ENCODE measurements at regions of chr17 and their contacts with region 1.

Region 1: GRCh38 chr17:39687811-39688518 is at the start of gene PGAP3:
- DNase-seq: peak; percentile 89
- ATAC-seq: peak; percentile 93
- H3K4me3 Mint-ChIP-seq: peak within 1 kb of the TSS; percentile 98
- H3K27ac Mint-ChIP-seq: peak within 1 kb of the TSS; percentile 95
- H3K4me1 Mint-ChIP-seq: peaks cover 28% of the 10 kb centered on the region
- H3K27me3 Mint-ChIP-seq: no peaks in the 10 kb centered on the region
- total RNA-seq, gene PGAP3: 12.3 to 14.7 TPM

Region 2: DNA sequence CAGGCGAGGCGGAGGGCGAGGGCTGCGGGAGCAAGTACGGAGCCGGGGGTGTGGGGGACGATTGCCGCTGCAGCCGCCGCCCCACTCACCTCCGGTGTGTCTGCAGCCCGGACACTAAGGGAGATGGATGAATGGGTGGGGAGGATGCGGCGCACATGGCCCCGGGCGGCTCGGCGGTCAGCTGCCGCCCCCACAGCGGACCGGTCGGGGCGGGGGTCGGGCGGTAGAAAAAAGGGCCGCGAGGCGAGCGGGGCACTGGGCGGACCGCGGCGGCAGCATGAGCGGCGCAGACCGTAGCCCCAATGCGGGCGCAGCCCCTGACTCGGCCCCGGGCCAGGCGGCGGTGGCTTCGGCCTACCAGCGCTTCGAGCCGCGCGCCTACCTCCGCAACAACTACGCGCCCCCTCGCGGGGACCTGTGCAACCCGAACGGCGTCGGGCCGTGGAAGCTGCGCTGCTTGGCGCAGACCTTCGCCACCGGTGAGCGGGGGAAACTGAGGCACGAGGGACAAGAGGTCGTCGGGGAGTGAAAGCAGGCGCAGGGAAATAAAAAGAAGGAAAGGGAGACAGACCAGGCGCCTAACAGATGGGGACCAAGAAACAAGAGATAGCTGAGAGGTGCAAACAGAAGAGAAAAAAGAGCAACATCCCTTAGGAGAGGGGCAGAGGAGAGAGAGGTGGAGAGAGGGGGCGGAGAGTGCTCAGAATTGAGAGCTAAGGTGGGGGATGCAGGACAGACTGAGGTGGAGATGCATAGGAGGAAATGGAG is 19.6 kb before region 1 on chr17 and contains the start of gene PNMT:
- CTCF ChIA-PET with region 1: interaction called, 12 read pairs
- POLR2A ChIA-PET with region 1: interaction called, 12 read pairs
- DNase-seq: peak; percentile 78
- ATAC-seq: peak; percentile 83
- H3K4me3 Mint-ChIP-seq: peak within 1 kb of the TSS; percentile 26
- H3K27ac Mint-ChIP-seq: no peak within 1 kb of the TSS
- H3K4me1 Mint-ChIP-seq: peaks cover 11% of the 10 kb centered on the region
- H3K27me3 Mint-ChIP-seq: peaks cover 29% of the 10 kb centered on the region
- total RNA-seq, gene PNMT: not detected

Region 3: DNA sequence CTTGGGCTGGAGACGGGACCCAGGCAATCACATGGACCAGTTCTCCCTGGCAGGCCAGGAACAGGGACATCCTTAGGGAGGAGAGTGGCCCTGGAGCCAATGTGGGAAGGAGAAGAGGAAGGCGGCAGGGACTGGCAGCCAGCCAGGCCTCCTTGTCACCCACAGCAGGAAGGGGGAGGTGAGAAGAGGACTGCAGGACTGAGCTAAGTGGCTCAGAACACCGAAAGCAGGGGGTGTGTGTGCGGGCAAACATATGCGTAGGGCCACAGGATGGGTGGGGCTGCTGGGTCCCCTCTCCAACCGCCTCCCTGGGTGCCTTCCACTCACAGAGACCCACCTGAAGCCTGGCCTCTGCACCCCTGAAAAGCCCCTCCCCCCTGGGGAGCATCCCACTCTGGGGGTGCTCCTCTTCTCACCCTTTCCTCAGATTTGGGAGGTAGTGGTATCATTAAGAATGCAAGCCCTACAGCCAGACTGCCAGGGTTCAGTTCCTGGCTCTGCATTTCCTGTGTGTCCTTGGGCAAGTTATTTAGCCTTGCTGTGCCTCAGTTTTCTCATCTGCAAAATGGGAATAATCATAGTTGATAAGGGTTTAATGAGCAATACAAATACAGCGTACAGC is 11.7 kb before region 1 on chr17:
- CTCF ChIA-PET with region 1: interaction called, 11 read pairs
- POLR2A ChIA-PET with region 1: interaction called, 32 read pairs
- DNase-seq: peak; percentile 80
- ATAC-seq: peak; percentile 76
- H3K4me3 Mint-ChIP-seq: no peak overlapping the region
- H3K27ac Mint-ChIP-seq: peak overlapping the region; percentile 87
- H3K4me1 Mint-ChIP-seq: peaks cover 63% of the 10 kb centered on the region
- H3K27me3 Mint-ChIP-seq: peaks cover 3% of the 10 kb centered on the region

Region 4: GRCh38 chr17:39763046-39763820 is 75.3 kb after region 1 on chr17:
- CTCF ChIA-PET with region 1: no interaction called
- POLR2A ChIA-PET with region 1: no interaction called
- DNase-seq: no peak
- ATAC-seq: no peak
- H3K4me3 Mint-ChIP-seq: no peak overlapping the region
- H3K27ac Mint-ChIP-seq: no peak overlapping the region
- H3K4me1 Mint-ChIP-seq: peaks cover 63% of the 10 kb centered on the region
- H3K27me3 Mint-ChIP-seq: no peaks in the 10 kb centered on the region

Region 5: DNA sequence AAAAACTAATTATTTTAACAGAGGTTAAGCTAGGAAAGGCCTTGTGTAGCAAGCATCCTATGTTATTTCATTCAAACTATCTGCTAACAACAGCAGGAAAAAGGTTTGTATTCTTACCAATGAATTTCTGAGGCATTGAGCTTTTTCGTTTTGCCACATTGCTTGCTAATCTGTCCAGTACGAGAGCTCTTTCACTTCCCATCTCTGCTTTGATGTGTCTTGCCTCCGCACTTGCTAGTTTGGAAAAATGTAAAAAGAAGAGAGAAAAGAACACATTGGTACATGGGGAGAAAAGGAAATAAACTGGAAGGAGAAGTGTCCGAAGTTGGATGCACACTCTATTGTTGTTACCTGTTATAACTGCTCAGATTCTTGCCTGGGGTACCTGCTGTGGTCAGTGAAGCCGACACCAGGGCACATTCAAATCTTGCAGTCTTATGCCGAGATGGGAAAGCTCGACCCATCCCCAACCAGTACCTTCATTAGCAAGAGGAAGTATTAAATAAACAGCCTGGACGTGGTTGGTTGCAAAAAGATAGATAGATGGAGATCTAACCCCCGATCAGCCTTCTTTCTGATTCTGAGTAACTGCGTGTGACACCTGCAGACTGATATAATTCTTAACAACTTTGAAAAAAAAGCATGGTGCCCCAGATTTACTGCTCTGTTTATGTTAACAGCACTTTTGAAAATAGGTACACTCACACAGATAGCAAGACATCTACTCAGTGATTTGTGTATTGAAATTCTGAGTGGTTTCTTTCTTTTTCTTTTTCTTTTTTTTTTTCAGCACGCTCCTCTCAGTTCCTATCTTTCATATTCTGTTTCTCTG is 89.8 kb after region 1 on chr17:
- CTCF ChIA-PET with region 1: no interaction called
- POLR2A ChIA-PET with region 1: no interaction called
- DNase-seq: no peak
- ATAC-seq: peak; percentile 60
- H3K4me3 Mint-ChIP-seq: peak overlapping the region; percentile 77
- H3K27ac Mint-ChIP-seq: peak overlapping the region; percentile 88
- H3K4me1 Mint-ChIP-seq: peaks cover 86% of the 10 kb centered on the region
- H3K27me3 Mint-ChIP-seq: no peaks in the 10 kb centered on the region

Region 6: DNA sequence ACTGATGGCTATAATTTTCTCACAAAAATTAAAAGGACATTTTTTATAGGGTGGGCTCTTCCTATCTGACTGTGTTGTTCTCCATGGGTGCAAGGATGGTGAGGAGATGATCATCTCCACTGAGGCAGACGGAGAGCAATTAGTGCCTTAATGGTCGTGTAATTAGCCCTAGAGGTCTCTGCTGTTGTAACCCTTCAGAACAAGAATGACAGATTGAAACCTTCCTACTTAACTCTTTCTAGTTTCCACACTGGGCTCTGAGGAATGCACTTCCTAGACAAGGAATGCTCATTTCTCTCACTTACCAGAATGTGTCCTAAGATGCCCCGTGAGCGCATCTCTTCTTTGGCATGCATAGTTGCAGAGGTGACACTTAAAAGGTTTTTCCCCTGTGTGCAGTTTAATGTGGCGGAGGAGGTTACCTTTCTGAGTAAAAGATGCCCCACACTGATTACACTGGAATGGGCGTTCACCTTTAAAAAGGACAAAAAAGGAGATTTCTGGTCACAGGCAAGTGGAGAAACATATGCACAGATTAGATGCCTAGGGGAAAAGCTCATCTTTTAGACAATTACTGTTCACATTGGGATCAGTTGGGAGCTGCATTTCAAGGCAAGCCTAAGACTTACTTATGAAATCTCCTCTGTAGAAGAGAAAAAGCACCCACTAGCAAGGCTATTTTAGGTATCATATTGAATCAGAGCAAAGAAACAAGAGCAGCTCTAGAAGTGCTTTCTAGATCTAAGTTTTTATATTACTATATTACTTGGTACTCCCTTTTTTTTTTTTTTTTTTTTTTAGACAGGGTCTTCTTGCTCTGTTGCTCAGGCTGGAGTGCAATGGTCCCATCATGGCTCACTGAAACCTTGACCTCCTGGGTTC is 103.4 kb after region 1 on chr17:
- CTCF ChIA-PET with region 1: no interaction called
- POLR2A ChIA-PET with region 1: no interaction called
- DNase-seq: peak; percentile 66
- ATAC-seq: peak; percentile 69
- H3K4me3 Mint-ChIP-seq: peak overlapping the region; percentile 20
- H3K27ac Mint-ChIP-seq: peak overlapping the region; percentile 72
- H3K4me1 Mint-ChIP-seq: peaks cover 58% of the 10 kb centered on the region
- H3K27me3 Mint-ChIP-seq: no peaks in the 10 kb centered on the region